Activated CD4-positive, alpha-beta memory T cell treated with anti-CD3 and anti-CD28 coated beads for 36 hours (primary cell): ENCODE measurements at regions of chr1 and their contacts with region 1.

Region 1: DNA sequence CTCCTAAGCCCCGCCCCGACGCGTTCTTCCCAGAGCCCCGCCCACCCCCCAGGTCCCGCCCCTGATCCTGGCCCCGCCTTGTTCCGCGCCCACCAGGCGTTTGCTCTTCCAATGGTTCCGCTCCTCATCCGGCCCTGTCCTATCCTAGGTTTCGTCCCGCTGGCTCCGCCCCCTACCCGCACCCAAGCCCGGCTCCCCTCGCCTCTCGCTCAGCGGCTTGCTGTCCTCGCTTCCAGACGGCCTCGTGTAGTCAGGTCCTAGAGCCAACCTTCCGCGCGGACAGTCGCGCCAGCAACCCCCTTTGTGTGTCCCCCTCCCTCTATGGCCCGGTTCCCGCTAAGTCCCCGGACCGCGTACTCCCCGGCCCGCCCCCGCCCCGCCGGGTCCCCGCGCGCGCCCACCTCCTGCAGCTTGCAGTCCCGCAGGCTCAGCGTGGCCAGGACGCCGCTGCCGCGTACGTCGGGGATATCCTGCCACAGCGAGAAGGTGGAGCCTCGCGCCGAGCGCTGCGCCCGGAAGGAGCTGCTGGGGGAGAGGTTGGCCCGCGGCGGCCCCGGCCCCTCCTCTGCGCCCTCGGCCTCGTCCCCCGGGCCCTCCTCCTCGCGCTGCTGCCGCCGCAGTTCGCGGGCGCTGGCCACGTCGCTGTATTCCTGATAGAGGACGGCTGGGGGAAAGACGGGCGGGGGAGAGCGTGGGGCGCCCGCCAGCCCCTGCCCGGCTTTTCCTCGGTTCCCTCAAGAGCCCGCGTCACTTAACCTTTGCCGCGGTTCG is 5.7 kb downstream of the ARHGEF19 start:
- DNase-seq: peak; percentile 96
- H3K4me3 Mint-ChIP-seq: peak overlapping the region; percentile 80
- H3K27ac Mint-ChIP-seq: peak overlapping the region; percentile 91
- H3K4me1 Mint-ChIP-seq: peaks cover 12% of the 10 kb centered on the region
- H3K27me3 Mint-ChIP-seq: no peaks in the 10 kb centered on the region

Region 2: GRCh38 chr1:16217061-16217785 is 10.5 kb after region 1 on chr1:
- CTCF ChIA-PET with region 1: interaction called, 5 read pairs
- POLR2A ChIA-PET with region 1: interaction called, 12 read pairs
- intact Hi-C with region 1: loop called (anchors 1 kb)
- DNase-seq: peak; percentile 98
- H3K4me3 Mint-ChIP-seq: peak overlapping the region; percentile 81
- H3K27ac Mint-ChIP-seq: no peak overlapping the region
- H3K4me1 Mint-ChIP-seq: peaks cover 10% of the 10 kb centered on the region
- H3K27me3 Mint-ChIP-seq: peaks cover 2% of the 10 kb centered on the region

Region 3: GRCh38 chr1:16236511-16237342 is 30.0 kb after region 1 on chr1 and contains the start of gene CPLANE2:
- CTCF ChIA-PET with region 1: interaction called, 7 read pairs
- POLR2A ChIA-PET with region 1: interaction called, 5 read pairs
- intact Hi-C with region 1: loop called (anchors 1 kb)
- DNase-seq: peak; percentile 98
- H3K4me3 Mint-ChIP-seq: peak within 1 kb of the TSS; percentile 85
- H3K27ac Mint-ChIP-seq: peak within 1 kb of the TSS; percentile 82
- H3K4me1 Mint-ChIP-seq: peaks cover 17% of the 10 kb centered on the region
- H3K27me3 Mint-ChIP-seq: no peaks in the 10 kb centered on the region
- total RNA-seq, gene CPLANE2: 3.9 to 5.0 TPM

Region 4: DNA sequence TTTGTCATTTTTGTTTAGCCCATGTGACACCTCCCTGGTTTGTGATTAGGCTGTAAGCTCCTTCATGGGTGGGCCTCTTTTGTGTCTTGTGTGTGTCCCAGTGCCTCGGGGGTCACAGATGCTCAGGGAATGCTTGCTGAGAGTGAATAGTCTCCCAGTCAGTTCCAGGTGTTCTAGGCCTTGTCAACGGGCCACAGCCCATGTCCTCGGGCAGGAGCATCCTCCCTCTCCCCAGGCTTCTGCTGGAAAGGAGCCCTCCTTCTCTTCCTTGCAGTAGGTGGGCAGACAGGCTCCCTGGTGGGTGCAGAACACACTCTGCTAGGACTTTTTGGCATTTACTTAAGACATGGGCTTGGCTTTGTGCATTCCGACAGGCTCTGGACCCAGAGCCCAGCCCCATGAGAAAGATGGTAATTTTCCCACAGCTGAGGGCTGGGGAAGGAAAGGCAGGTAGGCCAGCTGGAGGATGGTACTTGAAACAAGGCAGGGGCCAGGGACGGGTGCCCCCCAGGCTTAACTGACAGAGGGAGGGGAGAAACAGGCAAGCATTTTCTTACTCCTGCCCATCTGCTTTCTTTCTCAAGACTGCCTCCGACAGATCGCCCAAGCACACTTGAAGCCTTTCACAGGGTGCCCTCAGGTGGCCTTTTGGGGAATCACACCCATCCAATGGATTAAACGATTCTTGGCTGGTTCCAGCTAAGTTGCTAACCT is 37.4 kb after region 1 on chr1:
- CTCF ChIA-PET with region 1: interaction called, 31 read pairs
- POLR2A ChIA-PET with region 1: no interaction called
- intact Hi-C with region 1: loop called (anchors 1 kb)
- DNase-seq: peak; percentile 86
- H3K4me3 Mint-ChIP-seq: no peak overlapping the region
- H3K27ac Mint-ChIP-seq: no peak overlapping the region
- H3K4me1 Mint-ChIP-seq: peaks cover 8% of the 10 kb centered on the region
- H3K27me3 Mint-ChIP-seq: no peaks in the 10 kb centered on the region

Region 5: GRCh38 chr1:16266411-16267118 is 59.8 kb after region 1 on chr1:
- CTCF ChIA-PET with region 1: no interaction called
- POLR2A ChIA-PET with region 1: no interaction called
- intact Hi-C with region 1: no loop called
- DNase-seq: no peak
- H3K4me3 Mint-ChIP-seq: no peak overlapping the region
- H3K27ac Mint-ChIP-seq: no peak overlapping the region
- H3K4me1 Mint-ChIP-seq: peaks cover 18% of the 10 kb centered on the region
- H3K27me3 Mint-ChIP-seq: no peaks in the 10 kb centered on the region